BJ (cell line): ENCODE measurements at regions of chr20 and their contacts with region 1.

Region 1: DNA sequence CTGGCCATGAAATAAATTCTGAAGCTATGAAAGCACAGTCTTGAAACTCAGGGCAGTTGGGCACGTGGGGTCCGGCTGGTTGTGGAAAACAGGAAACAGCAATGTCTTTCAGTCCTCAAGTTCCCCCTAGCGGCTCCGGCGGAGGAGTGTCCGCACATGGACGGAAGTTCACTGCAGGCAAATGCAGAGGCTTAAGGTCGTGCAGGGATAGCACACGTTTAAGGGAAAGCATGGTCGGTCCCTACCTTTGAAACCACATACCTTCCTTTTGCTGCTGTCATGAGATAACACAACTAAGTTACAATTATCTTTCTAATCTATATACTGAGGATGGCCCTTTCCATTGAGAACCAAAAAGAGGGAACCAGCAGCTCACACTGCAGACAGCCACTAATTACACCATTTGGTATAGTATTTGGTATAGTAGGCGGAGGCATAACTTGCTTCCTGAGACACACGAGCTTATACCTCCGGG is 52.6 kb upstream of the NFATC2 start:
- DNase-seq: peak; percentile 38
- H3K4me3 ChIP-seq: no peak overlapping the region
- H3K27me3 ChIP-seq: no peaks in the 10 kb centered on the region
- CTCF ChIP-seq: peak; percentile 90

Region 2: DNA sequence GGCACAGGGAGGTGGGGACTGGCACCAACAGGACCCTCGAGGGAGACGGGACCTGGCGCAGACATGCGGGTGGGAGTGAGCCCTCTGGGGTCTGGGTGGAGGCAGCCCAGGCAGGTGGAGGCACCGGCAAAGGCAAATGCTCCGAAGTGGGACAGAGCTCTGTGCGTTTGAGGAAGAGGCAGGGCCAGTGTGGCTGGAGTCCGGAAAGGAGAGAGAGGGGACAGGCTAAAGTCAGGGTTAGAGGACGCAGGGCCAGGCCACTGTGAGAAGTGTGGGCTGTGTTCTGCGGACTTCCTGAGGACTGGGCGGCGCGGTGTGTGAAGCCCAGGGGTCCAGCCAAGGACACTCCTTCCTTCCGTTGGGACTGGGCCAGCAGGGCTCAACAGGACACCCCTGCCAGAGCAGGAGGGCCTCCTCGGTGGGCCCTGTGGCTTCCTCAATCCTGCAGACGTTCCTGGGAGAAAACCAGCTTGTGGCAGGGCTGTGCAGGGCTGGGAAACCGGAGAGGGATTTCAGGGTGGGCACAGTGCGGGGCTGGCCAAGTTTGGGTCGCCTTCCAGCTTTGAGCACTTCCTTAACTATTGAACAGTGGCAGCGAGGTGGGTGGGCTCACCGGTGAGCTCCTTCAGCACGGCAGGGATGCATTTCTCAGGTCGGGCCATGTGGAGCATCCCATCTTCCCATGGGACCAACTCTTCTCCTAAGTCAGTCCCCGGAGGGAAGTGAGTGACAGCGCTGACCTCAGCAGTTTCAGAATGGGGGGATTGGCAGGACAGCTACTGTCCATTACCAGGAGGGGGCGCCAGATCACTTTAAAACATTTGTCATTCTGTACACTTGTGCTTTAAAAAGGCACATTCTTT is 614.0 kb before region 1 on chr20:
- CTCF ChIA-PET with region 1: interaction called, 11 read pairs
- POLR2A ChIA-PET with region 1: no interaction called
- DNase-seq: no peak
- H3K4me3 ChIP-seq: no peak overlapping the region
- H3K27me3 ChIP-seq: no peaks in the 10 kb centered on the region
- CTCF ChIP-seq: peak; percentile 79

Region 3: DNA sequence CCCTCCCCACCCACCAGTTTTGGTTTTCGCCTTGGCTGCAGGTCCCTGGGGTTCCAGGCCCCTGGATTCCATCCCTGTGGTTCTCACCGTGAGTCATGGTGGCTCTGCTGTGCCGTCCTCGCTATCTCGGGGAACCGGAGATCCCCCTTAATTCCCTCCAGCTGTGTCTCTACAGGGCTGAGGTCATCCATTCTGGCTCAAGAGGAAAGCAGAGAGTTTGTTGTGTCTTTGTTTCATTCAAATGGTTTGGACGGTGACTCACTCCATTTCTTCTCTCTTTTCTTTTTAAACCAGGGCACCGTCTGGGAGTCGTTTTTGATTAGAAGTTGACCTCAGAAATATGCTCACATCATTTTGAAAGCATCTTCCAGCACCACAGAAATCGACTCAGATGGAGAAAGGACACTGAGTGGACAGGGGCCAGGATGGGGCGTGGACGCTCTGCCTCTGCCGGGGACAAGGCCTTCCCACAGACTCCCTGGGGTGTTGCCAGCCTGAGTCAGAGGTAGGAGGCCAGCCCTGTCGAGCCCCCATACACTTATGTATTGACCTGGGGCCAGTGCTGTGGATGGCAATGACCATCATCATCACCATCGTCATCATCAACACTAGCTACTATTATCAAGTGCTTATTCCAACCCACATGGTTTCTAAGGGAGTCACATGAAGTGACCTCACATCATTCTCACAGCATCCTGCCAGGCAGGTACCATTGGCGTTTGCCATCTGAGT is 228.8 kb before region 1 on chr20:
- CTCF ChIA-PET with region 1: interaction called, 66 read pairs
- POLR2A ChIA-PET with region 1: no interaction called
- DNase-seq: peak; percentile 100
- H3K4me3 ChIP-seq: no peak overlapping the region
- H3K27me3 ChIP-seq: no peaks in the 10 kb centered on the region
- CTCF ChIP-seq: no peak

Region 4: GRCh38 chr20:51378171-51378929 is 216.7 kb before region 1 on chr20:
- CTCF ChIA-PET with region 1: interaction called, 66 read pairs
- POLR2A ChIA-PET with region 1: no interaction called
- DNase-seq: no peak
- H3K4me3 ChIP-seq: no peak overlapping the region
- H3K27me3 ChIP-seq: no peaks in the 10 kb centered on the region
- CTCF ChIP-seq: no peak

Region 5: DNA sequence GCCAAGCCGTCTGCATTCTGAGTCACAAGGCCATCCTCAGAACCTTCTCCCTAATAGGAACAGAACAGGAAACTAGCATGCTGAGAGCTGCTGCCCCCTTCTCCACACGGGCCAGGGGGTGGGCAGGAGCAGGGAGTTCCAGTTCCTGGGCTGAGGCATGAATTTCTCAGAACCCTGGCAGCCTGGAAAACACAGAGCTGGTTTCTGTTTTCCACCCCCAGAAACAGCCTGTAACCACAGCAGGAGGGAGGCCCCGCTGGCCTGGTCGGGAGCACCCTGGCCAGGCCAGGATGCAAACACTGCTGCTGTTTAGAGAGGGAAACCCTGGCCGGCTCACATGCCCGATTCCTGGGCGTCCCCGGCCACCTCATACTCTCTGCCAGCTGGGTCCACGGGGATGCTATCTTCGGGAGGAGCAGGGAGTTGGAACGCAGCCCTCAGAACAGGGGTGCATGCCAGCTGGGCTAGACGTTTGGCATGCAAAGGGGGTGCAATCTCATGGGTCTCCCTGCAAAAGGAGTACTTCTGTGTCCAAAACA is 182.7 kb before region 1 on chr20:
- CTCF ChIA-PET with region 1: interaction called, 14 read pairs
- POLR2A ChIA-PET with region 1: no interaction called
- DNase-seq: no peak
- H3K4me3 ChIP-seq: no peak overlapping the region
- H3K27me3 ChIP-seq: no peaks in the 10 kb centered on the region
- CTCF ChIP-seq: no peak

Region 6: GRCh38 chr20:51584737-51585136 is 10.4 kb before region 1 on chr20:
- CTCF ChIA-PET with region 1: interaction called, 11 read pairs
- POLR2A ChIA-PET with region 1: no interaction called
- DNase-seq: no peak
- H3K4me3 ChIP-seq: no peak overlapping the region
- H3K27me3 ChIP-seq: no peaks in the 10 kb centered on the region
- CTCF ChIP-seq: no peak